GM18951 (cell line): ENCODE measurements at regions of chr5 and their contacts with region 1.

Region 1: GRCh38 chr5:122515709-122516431 is 203.8 kb downstream of the SNCAIP start:
- POLR2A ChIP-seq: no peak

Region 2: GRCh38 chr5:122999945-123000563 is 484.2 kb after region 1 on chr5:
- in situ Hi-C with region 1: loop called (anchors 25 kb)
- POLR2A ChIP-seq: no peak

Region 3: DNA sequence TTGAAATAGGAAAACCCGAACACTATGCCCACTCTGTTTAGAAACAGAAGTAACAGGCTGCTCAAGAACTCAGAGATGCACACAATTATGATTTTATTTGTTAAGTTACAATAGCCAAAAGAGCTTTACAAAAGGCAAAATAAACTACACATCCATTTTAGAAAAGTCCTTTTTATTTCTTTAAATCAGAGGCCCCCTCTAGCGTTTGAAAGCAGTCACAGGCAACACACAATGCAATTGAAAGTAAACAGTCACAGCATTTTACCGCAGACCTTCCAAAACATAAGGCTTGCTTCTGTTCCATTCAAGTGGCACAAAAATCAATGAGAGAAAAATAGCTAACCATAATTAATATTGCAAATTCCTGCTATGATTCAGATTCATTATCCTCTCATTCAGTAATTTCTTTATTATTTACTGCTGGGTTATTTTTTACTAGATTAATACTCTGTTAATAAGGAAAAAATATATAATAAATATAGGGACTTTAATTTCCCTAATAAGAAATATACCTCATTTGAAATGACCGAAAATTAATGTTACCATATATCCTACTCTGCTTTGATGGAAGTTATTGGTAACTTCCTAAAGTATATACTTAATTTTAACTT is 829.1 kb after region 1 on chr5:
- in situ Hi-C with region 1: loop called (anchors 25 kb)
- POLR2A ChIP-seq: no peak